ENCODE measurements at regions of chr16 and their contacts with region 1.

Region 1: DNA sequence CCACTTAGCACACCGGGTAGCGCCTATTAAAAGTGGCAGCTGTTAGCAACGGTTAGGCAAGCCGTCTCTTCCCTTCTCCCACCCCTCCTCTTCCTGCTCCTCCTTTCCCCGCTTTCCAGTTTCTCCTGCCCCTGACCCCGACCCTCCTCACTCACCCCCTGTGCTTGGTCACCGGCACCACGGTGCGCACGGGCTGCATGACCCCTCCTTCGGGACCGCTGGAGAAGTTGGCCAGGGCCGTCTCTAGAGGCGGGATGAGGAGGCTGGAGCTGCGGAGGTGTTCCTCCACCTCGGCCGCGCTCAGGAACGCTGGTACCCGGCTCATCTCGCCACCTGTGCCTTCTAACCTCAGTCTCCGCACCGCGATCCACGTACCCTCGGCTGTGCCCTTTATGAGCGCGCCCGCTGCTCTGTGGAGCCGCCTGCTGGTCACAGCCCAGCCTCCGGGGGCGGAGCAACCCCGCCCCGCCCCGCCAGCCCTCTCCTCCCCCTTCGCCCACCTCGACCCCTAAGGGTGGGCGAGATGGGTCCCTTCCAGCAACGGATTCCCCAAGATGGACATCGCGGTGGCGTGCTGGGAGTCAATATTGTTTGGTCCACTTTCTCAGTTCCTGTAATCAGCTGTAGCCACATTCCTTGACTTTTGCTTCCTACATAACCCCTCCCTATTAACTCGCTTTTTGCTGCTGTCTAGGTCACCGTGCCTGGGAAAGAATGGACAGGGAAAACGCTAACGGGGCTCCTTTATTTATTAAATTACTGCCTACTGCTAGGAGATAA is at the start of gene CRYM:
- DNase-seq: peak; percentile 26
- H3K4me3 Mint-ChIP-seq: no peak within 1 kb of the TSS
- H3K27ac Mint-ChIP-seq: no peak within 1 kb of the TSS
- H3K4me1 Mint-ChIP-seq: no peaks in the 10 kb centered on the region
- H3K27me3 Mint-ChIP-seq: peaks cover 56% of the 10 kb centered on the region
- total RNA-seq, gene CRYM: not detected in 2 replicates

Region 2: DNA sequence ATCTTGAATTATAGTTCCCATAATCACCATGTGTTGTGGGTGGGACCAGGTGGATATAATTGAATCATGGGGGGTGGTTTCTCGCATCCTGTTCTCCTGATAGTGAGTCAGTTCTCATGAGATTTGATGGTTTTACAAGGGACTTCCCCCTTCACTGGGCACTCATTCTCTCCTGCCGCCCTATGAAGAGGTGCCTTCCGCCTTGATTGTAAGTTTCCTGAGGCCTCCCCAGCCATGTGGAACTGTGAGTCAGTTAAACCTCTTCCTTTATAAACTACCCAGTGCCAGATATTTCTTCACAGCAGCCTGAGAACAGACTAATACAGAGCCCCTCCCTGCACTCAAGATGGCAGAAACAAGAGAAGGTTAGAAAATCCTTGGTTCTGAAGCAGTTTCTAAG is 93.3 kb before region 1 on chr16:
- intact Hi-C with region 1: loop called (anchors 1 kb)
- DNase-seq: no peak
- H3K4me3 Mint-ChIP-seq: no peak overlapping the region
- H3K27ac Mint-ChIP-seq: no peak overlapping the region
- H3K4me1 Mint-ChIP-seq: peaks cover 5% of the 10 kb centered on the region
- H3K27me3 Mint-ChIP-seq: peaks cover 5% of the 10 kb centered on the region

Measured in activated T-helper 1 cell treated with anti-CD3 and anti-CD28 coated beads, Interleukin-12 subunit alpha, Interleukin-12 subunit beta, Interleukin-2, Interleukin-4 antibody, amounts not matched to agents 30 ng/mL and 10 ng/mL and 1 ng/mL, durations not matched to agents 14 hours and 24 hours and 36 hours (primary cell).